Heart right ventricle (tissue), 16 donors: ENCODE measurements at regions of chr6 and their contacts with region 1.

Region 1: GRCh38 chr6:104396077-104396476 is 463.6 kb downstream of the HACE1 start:
- DNase-seq: no peak
- ATAC-seq: no peak
- H3K4me3 ChIP-seq: no peak overlapping the region
- H3K27ac ChIP-seq: no peak overlapping the region
- H3K4me1 ChIP-seq: no peaks in the 10 kb centered on the region
- H3K27me3 ChIP-seq: no peaks in the 10 kb centered on the region
- CTCF ChIP-seq: no peak

Region 2: GRCh38 chr6:104357928-104358327 is 38.1 kb before region 1 on chr6:
- intact Hi-C with region 1: loop called in 1 of 10 experiments (anchors 1 kb)
- DNase-seq: no peak
- ATAC-seq: no peak
- H3K4me3 ChIP-seq: no peak overlapping the region
- H3K27ac ChIP-seq: no peak overlapping the region
- H3K4me1 ChIP-seq: no peaks in the 10 kb centered on the region
- H3K27me3 ChIP-seq: peaks cover 0 to 5% (median 0%) of the 10 kb centered on the region in 7 donors
- CTCF ChIP-seq: no peak